ENCODE measurements at regions of chr12 and their contacts with region 1.

Region 1: DNA sequence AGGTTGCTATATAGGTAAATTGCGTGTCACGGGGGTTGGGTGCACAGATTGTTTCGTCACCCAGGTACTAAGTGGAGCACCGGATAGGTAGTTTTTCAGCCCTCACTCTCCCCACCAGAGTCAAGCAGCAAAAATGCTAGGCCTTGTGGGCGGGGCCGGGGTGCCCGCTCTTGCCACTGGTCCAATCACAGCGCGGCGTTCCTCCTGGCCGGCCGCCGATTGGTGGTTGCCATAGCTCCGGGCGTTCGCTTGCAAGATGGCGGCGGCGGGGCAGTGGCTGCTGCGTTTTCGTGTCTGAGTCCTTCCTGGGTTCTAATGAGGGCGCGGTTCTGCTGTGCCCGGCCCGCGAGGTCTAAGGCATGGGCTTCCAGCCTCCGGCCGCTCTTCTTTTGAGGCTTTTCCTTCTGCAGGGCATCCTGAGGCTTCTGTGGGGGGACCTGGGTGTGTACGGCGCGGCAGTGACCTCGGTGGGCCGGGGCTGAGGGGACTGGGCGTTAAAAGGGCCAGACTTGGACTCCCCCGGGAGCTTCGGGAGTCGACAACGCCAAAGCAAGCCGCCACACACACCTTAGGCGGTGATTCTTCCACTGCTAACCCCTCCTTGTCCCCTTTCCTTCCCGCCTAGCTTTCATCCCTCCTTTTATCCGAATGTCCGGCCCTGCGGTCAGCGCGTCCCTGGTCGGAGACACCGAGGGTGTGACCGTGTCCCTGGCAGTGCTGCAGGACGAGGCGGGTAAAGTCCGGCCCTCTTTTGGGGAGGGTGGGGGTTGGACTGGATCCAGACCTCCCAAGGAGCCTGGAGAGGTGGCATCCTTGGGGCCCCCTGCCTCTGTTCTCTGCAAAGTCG is at the start of gene TCTN2:
- DNase-seq: peak; percentile 89 to 95 (median 92)
- ATAC-seq: peak; percentile 100
- H3K4me3 ChIP-seq: peak within 1 kb of the TSS; percentile 94
- H3K4me3 Mint-ChIP-seq: peak within 1 kb of the TSS; percentile 89
- H3K27ac ChIP-seq: no peak within 1 kb of the TSS
- H3K27ac Mint-ChIP-seq: peak within 1 kb of the TSS; percentile 69
- H3K4me1 ChIP-seq: peaks cover 18% of the 10 kb centered on the region
- H3K4me1 Mint-ChIP-seq: peaks cover 15% of the 10 kb centered on the region
- H3K27me3 ChIP-seq: no peaks in the 10 kb centered on the region
- H3K27me3 Mint-ChIP-seq: no peaks in the 10 kb centered on the region
- CTCF ChIP-seq: no peak
- total RNA-seq, gene TCTN2: 3.2 to 3.5 TPM

Region 2: DNA sequence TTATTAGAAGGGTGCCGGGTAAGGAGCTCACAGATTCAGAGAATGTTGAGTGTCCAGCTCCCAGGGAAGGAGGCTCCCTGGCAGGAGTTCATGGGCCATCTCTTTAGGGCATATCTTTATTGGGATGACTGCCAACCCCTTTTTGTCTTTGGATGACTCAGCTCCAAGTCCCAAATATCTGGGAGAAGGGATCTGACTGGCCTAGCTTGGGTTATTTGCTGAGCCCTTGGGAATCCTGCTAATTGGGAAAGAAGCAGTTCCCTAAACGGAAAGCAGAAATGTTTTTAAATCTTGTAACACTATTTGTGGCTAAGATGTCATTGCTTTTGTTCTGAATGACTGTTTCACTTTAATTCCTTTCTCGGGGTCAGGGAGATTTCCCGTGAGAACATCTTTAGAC is 56.6 kb before region 1 on chr12:
- CTCF ChIA-PET with region 1: no interaction called
- POLR2A ChIA-PET with region 1: no interaction called
- intact Hi-C with region 1: no loop called
- DNase-seq: no peak
- ATAC-seq: no peak
- H3K4me3 ChIP-seq: no peak overlapping the region
- H3K4me3 Mint-ChIP-seq: no peak overlapping the region
- H3K27ac ChIP-seq: no peak overlapping the region
- H3K27ac Mint-ChIP-seq: no peak overlapping the region
- H3K4me1 ChIP-seq: no peaks in the 10 kb centered on the region
- H3K4me1 Mint-ChIP-seq: peaks cover 4% of the 10 kb centered on the region
- H3K27me3 ChIP-seq: no peaks in the 10 kb centered on the region
- H3K27me3 Mint-ChIP-seq: no peaks in the 10 kb centered on the region
- CTCF ChIP-seq: no peak

Region 3: GRCh38 chr12:123713398-123713797 is 42.3 kb after region 1 on chr12:
- CTCF ChIA-PET with region 1: no interaction called
- POLR2A ChIA-PET with region 1: interaction called, 14 read pairs
- intact Hi-C with region 1: loop called in 1 of 2 experiments (anchors 2 kb)
- DNase-seq: peak in 1 of 14 experiments; percentile 17
- ATAC-seq: no peak
- H3K4me3 ChIP-seq: peak overlapping the region; percentile 87
- H3K4me3 Mint-ChIP-seq: peak overlapping the region; percentile 85
- H3K27ac ChIP-seq: no peak overlapping the region
- H3K27ac Mint-ChIP-seq: peak overlapping the region; percentile 62
- H3K4me1 ChIP-seq: peaks cover 27% of the 10 kb centered on the region
- H3K4me1 Mint-ChIP-seq: peaks cover 38% of the 10 kb centered on the region
- H3K27me3 ChIP-seq: no peaks in the 10 kb centered on the region
- H3K27me3 Mint-ChIP-seq: no peaks in the 10 kb centered on the region
- CTCF ChIP-seq: no peak

Region 4: DNA sequence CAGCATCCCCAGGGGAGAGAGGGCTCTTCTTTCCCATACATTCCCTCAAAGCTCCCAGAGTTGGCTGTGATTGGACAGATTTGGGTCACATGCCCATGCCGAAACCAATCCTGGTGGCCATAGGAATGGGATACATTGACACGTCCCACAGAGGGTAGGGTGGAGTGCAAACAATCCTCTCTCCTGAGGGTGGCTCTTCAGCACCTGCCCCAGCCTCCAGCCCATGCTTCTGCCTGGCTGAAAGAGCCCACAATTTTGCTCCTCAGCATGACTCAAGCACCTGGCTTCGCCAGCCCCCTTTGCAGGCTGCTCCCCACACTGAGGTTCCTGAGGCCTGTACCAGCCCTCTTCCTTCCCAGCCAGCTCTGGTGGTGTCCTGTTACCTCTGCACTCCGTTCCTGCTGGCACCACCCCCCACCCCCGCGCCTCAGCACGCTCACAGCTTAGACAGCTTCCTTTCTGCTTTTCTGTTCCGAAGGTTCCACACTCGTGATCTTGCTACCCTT is 229.8 kb after region 1 on chr12:
- CTCF ChIA-PET with region 1: no interaction called
- POLR2A ChIA-PET with region 1: no interaction called
- intact Hi-C with region 1: no loop called
- DNase-seq: no peak
- ATAC-seq: peak; percentile 32
- H3K4me3 ChIP-seq: no peak overlapping the region
- H3K4me3 Mint-ChIP-seq: no peak overlapping the region
- H3K27ac ChIP-seq: no peak overlapping the region
- H3K27ac Mint-ChIP-seq: no peak overlapping the region
- H3K4me1 ChIP-seq: peaks cover 4% of the 10 kb centered on the region
- H3K4me1 Mint-ChIP-seq: peaks cover 10% of the 10 kb centered on the region
- H3K27me3 ChIP-seq: no peaks in the 10 kb centered on the region
- H3K27me3 Mint-ChIP-seq: no peaks in the 10 kb centered on the region
- CTCF ChIP-seq: no peak

Region 5: DNA sequence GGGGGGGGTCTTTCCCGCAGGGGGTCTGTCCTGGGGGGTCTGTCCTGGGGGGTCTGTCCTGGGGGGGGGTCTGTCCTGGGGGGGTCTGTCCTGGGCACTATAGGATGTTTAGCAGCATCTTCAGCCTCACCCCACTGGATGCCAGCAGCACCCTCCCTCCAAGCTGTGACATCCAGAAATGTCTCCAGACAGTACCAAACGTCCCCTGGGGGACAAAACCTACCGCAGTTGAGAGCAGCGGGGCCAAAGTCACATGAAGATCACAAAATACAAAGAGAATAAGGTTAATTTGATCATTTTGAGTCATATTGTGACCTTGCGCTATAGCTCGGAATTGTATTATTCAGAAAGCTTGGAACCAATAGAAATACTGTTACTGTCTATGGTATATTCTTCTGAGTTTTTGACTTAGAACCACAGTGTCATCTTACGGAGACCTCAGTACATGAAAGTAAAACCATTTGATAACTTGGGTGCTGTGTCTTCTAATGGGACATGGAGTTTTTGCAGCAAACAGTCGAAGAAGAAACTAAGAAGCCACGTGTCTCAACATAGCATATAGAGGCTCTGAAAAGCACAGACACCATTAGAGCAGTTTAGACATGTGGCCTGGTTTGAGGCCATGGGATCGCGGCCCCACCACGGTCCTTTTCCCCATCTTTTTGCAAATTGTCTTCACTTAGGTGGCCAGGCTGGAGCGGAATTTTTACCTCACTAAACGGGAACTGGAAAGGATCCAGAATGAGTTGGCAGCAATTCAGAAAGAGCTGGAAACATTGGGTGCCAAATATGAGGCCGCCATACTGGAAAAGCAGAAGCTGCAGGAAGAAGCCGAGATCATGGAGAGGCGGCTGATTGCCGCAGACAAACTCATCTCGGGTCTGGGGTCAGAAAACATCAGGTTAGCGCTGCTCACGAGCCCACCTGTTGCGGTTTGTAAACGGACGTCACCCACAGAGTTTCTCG is 241.6 kb after region 1 on chr12:
- CTCF ChIA-PET with region 1: no interaction called
- POLR2A ChIA-PET with region 1: no interaction called
- intact Hi-C with region 1: no loop called
- DNase-seq: no peak
- ATAC-seq: no peak
- H3K4me3 ChIP-seq: no peak overlapping the region
- H3K4me3 Mint-ChIP-seq: no peak overlapping the region
- H3K27ac ChIP-seq: no peak overlapping the region
- H3K27ac Mint-ChIP-seq: peak overlapping the region; percentile 28
- H3K4me1 ChIP-seq: no peaks in the 10 kb centered on the region
- H3K4me1 Mint-ChIP-seq: peaks cover 9% of the 10 kb centered on the region
- H3K27me3 ChIP-seq: no peaks in the 10 kb centered on the region
- H3K27me3 Mint-ChIP-seq: no peaks in the 10 kb centered on the region
- CTCF ChIP-seq: no peak